ENCODE measurements at regions of chr15 and their contacts with region 1.

Region 1: DNA sequence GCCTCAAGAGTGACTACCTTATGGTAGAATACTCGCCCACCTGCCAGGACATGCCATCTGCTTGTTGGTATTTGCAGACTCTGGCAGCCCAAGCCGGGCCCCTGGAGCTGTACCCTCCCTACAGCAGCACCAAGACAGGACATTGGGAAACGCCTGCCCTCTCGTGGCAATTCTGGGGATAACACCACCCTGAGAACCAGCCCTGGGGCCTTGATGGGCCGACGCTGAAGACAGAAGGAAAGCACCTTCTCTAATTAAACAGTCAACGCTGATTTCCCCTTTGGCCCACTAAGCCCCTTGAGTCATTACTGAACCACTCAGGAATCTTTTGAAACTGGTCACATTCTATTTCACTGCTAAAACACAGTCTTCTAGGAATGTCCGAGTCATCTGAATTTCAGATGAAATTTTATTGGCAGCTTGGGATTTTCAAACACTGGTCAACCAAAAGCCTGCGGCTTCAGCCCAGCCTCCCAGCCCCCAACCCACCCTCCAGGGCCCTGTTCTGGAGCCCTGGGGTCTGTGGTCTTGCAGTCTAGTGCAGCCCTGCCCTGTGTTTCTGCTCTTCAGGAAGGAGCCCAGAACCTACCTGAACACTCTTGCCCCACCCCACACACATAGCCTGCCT is 91.3 kb downstream of the TMEM266 start:
- H3K4me3 ChIP-seq: no peak overlapping the region
- H3K27ac ChIP-seq: no peak overlapping the region
- H3K4me1 ChIP-seq: peaks cover 3% of the 10 kb centered on the region; the same call in 1 of the 2 replicates
- CTCF ChIP-seq: peak; percentile 57; the same call in 1 of the 2 replicates

Region 2: DNA sequence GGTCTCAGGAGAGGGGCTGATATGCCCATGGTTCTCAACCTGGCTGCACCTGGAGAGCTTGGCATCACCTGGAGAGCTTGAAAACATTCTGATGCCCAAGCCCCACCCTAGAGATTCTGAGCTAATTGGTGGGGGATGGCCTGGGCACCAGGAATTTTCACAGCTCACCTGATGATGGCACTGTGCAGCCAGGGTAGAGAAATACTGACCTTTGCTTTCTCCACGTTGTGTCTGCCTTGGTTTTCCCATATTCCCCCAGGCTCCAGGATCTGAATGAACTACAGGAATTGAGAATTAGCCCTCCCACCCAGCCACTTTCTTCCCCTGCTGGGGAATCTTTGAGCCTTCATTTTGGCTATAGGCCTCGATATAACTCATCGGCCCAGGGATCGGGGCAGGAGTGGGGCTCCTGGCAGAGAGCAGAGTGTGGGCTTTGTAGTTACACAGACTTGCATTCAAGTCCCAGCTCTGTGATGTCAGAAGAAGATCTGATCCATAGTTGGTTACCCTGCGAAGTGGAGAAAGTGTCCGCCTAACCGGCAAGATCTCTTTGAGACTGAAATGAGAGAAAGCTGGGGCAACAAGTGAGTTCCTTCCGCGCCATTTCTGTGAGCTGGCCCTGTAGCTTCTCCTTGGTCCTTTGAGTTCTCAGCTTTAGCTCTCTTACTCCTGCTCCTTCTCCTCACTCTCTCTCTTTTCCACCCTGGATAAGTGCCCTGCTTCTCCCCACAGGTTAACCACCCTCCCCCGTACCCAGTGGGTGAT is 340.9 kb before region 1 on chr15:
- CTCF ChIA-PET with region 1: interaction called, 16 read pairs
- POLR2A ChIA-PET with region 1: no interaction called
- H3K4me3 ChIP-seq: no peak overlapping the region
- H3K27ac ChIP-seq: no peak overlapping the region
- H3K4me1 ChIP-seq: no peaks in the 10 kb centered on the region
- CTCF ChIP-seq: peak; percentile 42; the same call in 1 of the 2 replicates

Region 3: DNA sequence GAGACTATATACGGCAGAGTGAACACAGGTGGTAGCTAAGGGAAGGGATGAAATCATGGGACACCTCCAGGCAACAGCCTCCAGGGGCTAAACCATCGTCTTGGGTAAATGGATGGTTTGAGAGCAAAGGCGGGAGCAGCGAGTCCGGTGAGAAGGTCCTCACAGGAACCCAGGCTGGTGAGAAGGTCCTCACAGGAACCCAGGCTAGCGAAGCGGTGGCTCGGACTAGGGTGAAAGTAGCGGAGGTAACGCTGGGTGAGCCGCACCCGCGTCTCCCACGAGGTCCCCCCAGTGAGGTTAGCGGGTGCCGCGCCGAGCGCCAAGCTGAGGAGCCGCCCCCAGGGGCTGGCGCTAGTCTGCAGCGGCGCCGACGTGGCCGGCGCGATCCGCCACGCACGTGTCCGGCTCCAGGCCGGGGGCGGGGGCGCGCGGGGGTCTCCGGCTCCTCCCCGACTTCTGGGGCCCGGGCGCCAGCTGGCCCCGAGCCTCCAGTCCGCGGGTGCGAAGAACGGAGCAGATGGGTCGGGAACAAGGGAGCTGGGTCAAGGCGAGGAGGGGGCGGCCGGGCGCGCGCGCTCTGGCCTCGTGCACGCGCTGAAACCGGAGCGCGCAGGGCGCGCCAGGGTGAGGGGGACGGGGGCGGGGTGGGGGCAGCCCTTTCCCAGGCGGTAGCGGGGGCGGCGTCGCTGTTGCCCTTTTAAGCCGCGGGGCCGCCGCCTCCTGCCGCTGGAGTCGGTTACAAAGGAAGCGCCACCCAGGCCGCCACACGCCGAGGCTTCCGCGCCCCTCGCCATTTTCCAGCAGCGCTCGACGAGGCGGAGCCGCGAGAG is 308.1 kb before region 1 on chr15 and contains the start of gene UBE2Q2:
- CTCF ChIA-PET with region 1: interaction called, 11 read pairs
- POLR2A ChIA-PET with region 1: no interaction called
- H3K4me3 ChIP-seq: peak within 1 kb of the TSS; percentile 86
- H3K27ac ChIP-seq: peak within 1 kb of the TSS; percentile 93
- H3K4me1 ChIP-seq: peaks cover 25% of the 10 kb centered on the region
- CTCF ChIP-seq: no peak

Region 4: DNA sequence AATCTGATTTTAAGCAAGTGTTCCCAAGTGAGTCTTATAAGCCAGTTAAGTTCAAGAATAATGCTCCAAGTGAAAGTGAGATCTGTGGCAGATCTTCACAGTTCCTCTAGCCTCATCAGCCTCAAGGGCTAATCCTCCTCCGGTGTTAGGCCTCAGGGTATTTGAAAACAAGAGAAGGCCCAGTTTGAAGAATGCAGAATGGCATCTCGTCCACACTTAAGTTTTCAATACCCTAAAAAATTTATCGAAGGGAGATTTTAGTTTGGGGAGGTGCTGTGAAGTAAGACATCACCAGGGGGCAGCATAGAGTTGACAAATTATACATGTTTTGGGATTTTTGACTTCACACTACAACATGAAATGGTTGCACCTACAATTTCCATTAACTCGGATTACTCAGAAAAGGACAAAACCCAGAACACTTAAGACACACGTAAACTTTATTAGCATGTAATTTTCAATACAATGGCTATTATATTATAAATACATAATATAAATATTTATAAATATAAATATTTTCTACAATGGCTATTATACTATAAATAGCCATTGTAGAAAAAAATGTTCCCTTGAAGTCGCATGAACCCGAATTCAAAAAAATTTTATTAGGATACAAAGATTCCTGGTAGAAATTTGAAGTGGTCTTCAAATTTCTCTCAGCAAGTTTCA is 93.6 kb before region 1 on chr15:
- CTCF ChIA-PET with region 1: interaction called, 101 read pairs
- POLR2A ChIA-PET with region 1: no interaction called
- H3K4me3 ChIP-seq: peak overlapping the region; percentile 16
- H3K27ac ChIP-seq: no peak overlapping the region
- H3K4me1 ChIP-seq: no peaks in the 10 kb centered on the region
- CTCF ChIP-seq: no peak

Region 5: GRCh38 chr15:76163475-76163881 is 12.4 kb after region 1 on chr15:
- CTCF ChIA-PET with region 1: interaction called, 107 read pairs
- POLR2A ChIA-PET with region 1: interaction called, 4 read pairs
- H3K4me3 ChIP-seq: no peak overlapping the region
- H3K27ac ChIP-seq: no peak overlapping the region
- H3K4me1 ChIP-seq: peaks cover 16% of the 10 kb centered on the region
- CTCF ChIP-seq: no peak

Region 6: GRCh38 chr15:76185716-76186115 is 34.6 kb after region 1 on chr15:
- CTCF ChIA-PET with region 1: interaction called, 13 read pairs
- POLR2A ChIA-PET with region 1: no interaction called
- H3K4me3 ChIP-seq: no peak overlapping the region
- H3K27ac ChIP-seq: no peak overlapping the region
- H3K4me1 ChIP-seq: no peaks in the 10 kb centered on the region; the same call in 1 of the 2 replicates
- CTCF ChIP-seq: no peak

Region 7: DNA sequence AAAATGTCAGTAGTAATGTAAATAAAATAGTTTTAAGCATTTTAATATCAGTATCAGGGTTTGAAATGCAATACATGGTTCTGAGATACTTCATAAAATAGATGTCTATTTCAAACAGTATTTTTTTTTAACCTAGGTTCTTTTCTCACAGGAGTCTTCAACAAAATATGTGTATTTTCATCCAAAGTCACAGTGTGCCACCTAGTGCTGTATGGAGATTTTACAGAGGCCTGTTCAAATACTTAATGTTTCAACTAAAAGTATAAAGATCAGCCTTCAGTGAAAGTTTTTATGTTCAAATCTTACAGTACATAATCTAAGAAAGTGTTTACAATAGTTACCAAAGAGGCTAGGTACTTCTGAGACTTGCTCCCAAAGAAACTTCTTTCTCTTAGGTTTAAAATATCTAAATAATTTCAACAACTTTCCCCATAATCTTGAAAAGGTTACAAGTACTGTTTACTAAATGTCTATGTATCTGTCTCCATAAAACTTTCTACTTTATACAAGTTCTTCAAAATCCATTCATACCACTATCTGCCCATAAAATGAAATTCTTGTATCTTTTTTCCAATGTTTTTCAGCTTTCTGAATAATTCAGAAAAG is 715.7 kb after region 1 on chr15:
- CTCF ChIA-PET with region 1: interaction called, 16 read pairs
- POLR2A ChIA-PET with region 1: no interaction called
- H3K4me3 ChIP-seq: no peak overlapping the region
- H3K27ac ChIP-seq: no peak overlapping the region
- H3K4me1 ChIP-seq: peaks cover 27% of the 10 kb centered on the region; the same call in 1 of the 2 replicates
- CTCF ChIP-seq: no peak

Measured in HEK293 (cell line).